Activated CD8-positive, alpha-beta T cell treated with anti-CD3 and anti-CD28 coated beads, Interleukin-2, amount 10 ng/mL, durations not matched to agents 7 days and 5 days (primary cell): ENCODE measurements at regions of chr1 and their contacts with region 1.

Region 1: DNA sequence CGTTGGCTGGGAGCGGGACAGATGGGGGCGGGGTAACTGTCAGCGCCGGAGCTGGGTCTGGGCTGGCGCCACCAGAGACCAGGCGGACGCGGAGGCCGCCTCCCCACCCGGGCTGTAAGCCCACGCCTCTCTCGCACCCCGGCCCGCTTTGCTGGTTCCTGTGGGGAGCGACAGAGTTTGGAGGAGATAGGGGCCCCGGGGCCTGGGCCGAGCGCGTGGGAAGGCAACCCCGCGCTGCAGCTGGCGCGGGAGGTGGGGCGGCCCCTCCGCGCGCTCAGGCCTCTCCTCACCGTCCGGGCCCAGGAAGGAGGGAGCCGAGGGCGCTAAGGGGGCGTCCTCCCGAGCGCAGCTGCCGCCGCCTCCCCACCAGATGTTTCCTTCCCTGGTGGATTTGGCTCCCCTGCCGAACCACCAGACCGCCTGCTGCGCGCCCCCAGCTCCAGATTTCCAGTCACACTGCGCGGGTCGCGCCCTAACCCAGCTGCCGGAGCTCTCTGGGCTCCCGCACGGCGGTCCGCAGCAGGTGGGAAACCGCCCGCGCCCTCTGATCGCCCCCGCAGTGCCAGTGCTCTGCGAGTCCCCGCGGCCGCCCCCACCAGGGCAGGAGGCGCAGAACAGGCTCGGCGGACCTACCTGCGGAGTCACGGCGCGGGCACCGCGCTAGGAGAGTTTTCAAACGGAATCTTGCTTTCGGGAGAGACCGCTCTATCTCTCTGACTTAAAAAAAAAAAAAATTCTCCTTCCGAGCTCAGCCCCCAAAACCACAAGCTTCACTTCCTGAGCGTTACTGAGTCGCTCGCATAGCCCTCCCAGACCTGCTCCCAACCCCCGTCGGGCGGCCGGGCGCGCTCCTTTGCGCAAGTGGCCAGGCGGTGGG is 1.1 kb downstream of the GFI1 start:
- DNase-seq: peak; percentile 94
- ATAC-seq: peak; percentile 63
- H3K4me3 Mint-ChIP-seq: peak overlapping the region; percentile 90
- H3K27ac Mint-ChIP-seq: peak overlapping the region; percentile 91
- H3K4me1 Mint-ChIP-seq: peaks cover 44% of the 10 kb centered on the region
- H3K27me3 Mint-ChIP-seq: no peaks in the 10 kb centered on the region

Region 2: DNA sequence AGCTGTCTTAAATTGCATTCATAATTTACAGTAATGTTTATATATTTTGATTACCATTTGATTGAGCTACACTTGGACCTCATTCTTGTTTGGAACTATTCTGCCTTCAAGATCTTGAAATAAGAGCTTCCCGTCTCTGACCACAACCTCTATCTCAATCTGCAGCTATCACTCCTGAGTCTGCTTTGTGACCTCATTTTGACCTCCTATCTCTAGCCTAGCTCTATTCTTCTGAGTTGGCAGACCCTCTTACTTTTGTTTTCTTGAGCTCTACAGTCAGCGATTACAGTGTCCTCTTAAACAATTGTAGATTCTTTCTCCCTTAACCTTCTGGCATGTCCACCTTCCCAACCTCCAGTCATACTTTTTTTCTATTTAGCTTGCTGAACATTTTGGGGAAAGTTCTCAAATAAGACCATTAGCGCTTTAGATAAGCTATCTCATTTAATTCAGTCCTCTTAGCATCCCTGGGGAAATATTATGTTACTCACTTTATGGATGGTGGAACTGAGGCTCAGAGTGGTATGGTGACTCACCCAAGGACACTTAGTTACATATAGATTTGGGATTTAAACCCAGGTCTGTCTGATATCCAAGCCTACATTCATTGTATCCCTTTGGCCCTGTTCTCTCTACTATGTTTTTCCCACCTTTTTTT is 167.7 kb before region 1 on chr1:
- CTCF ChIA-PET with region 1: interaction called, 83 read pairs
- POLR2A ChIA-PET with region 1: interaction called, 157 read pairs
- DNase-seq: peak; percentile 60
- ATAC-seq: peak; percentile 76
- H3K4me3 Mint-ChIP-seq: peak overlapping the region; percentile 63
- H3K27ac Mint-ChIP-seq: peak overlapping the region; percentile 84
- H3K4me1 Mint-ChIP-seq: peaks cover 62% of the 10 kb centered on the region
- H3K27me3 Mint-ChIP-seq: no peaks in the 10 kb centered on the region

Region 3: GRCh38 chr1:92461364-92462097 is 24.1 kb before region 1 on chr1:
- CTCF ChIA-PET with region 1: interaction called, 4 read pairs
- POLR2A ChIA-PET with region 1: interaction called, 46 read pairs
- DNase-seq: peak; percentile 18
- ATAC-seq: no peak
- H3K4me3 Mint-ChIP-seq: peak overlapping the region; percentile 13
- H3K27ac Mint-ChIP-seq: no peak overlapping the region
- H3K4me1 Mint-ChIP-seq: peaks cover 73% of the 10 kb centered on the region
- H3K27me3 Mint-ChIP-seq: no peaks in the 10 kb centered on the region

Region 4: DNA sequence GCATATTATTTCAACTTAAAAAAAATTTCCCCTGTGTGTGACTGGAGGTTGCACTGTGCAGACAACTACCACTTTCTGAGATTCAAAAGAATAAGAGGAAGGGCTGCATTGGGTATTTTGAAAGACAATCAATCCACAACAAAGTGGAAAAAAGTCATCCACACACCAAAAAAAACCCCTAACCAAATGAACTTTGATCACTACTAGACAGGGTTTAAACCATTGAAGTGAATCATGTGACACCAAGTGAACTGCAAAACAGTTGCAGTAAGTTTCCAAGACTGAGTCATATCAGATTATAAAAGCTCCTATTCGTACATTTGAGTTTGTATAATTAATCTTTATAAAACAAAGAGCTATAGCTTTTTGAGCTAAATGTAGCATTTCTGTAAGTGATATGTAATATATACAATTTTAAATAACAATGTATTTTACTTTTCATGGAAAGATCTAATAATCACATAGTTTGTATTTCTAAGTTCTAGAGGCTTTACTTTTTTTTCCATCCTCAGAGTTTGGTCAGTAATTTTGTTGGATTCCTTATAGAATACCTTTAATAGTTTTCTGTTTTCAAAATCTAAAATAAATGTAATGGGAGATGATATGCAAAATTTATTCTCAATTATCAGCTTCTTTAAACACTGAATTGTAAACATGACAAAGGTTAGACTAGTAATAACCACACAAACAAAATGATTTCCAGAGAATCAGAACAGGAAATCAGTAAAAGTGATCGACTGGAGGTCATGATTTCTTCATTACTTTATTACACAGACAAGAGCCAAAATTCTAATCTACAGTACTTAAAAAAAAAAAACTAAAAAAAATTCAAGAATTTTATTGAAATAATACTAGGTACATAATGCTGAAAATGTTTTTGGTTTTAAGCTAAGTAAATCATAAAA is 51.6 kb after region 1 on chr1:
- CTCF ChIA-PET with region 1: interaction called, 47 read pairs
- POLR2A ChIA-PET with region 1: interaction called, 230 read pairs
- DNase-seq: peak; percentile 51
- ATAC-seq: peak; percentile 82
- H3K4me3 Mint-ChIP-seq: peak overlapping the region; percentile 60
- H3K27ac Mint-ChIP-seq: peak overlapping the region; percentile 91
- H3K4me1 Mint-ChIP-seq: peaks cover 70% of the 10 kb centered on the region
- H3K27me3 Mint-ChIP-seq: no peaks in the 10 kb centered on the region

Region 5: GRCh38 chr1:92577261-92577895 is 91.8 kb after region 1 on chr1:
- CTCF ChIA-PET with region 1: interaction called, 29 read pairs
- POLR2A ChIA-PET with region 1: interaction called, 47 read pairs
- DNase-seq: no peak
- ATAC-seq: peak; percentile 42
- H3K4me3 Mint-ChIP-seq: peak overlapping the region; percentile 34
- H3K27ac Mint-ChIP-seq: peak overlapping the region; percentile 77
- H3K4me1 Mint-ChIP-seq: peaks cover 66% of the 10 kb centered on the region
- H3K27me3 Mint-ChIP-seq: no peaks in the 10 kb centered on the region

Region 6: GRCh38 chr1:92599184-92599583 is 113.6 kb after region 1 on chr1:
- CTCF ChIA-PET with region 1: interaction called, 43 read pairs
- POLR2A ChIA-PET with region 1: interaction called, 21 read pairs
- DNase-seq: no peak
- ATAC-seq: peak; percentile 61
- H3K4me3 Mint-ChIP-seq: no peak overlapping the region
- H3K27ac Mint-ChIP-seq: no peak overlapping the region
- H3K4me1 Mint-ChIP-seq: peaks cover 25% of the 10 kb centered on the region
- H3K27me3 Mint-ChIP-seq: no peaks in the 10 kb centered on the region